ENCODE measurements at regions of chr11 and their contacts with region 1.

Region 1: GRCh38 chr11:1869427-1870325 is 16.8 kb downstream of the LSP1 start:
- DNase-seq: no peak
- ATAC-seq: peak; percentile 50
- H3K4me3 ChIP-seq: no peak overlapping the region
- H3K27ac ChIP-seq: no peak overlapping the region
- H3K4me1 ChIP-seq: peaks cover 20% of the 10 kb centered on the region
- H3K27me3 ChIP-seq: no peaks in the 10 kb centered on the region
- CTCF ChIP-seq: peak; percentile 79

Region 2: GRCh38 chr11:1261241-1262071 is 608.2 kb before region 1 on chr11:
- CTCF ChIA-PET with region 1: interaction called, 11 read pairs
- POLR2A ChIA-PET with region 1: no interaction called
- in situ Hi-C with region 1: no loop called
- intact Hi-C with region 1: no loop called
- DNase-seq: no peak
- ATAC-seq: no peak
- H3K4me3 ChIP-seq: peak overlapping the region; percentile 44 to 71
- H3K27ac ChIP-seq: peak overlapping the region; percentile 82; the same call in 1 of the 2 replicates
- H3K4me1 ChIP-seq: peaks cover 19% of the 10 kb centered on the region
- H3K27me3 ChIP-seq: no peaks in the 10 kb centered on the region; the same call in 1 of the 2 replicates
- CTCF ChIP-seq: no peak

Region 3: GRCh38 chr11:1837171-1838076 is 32.3 kb before region 1 on chr11:
- CTCF ChIA-PET with region 1: interaction called, 6 read pairs
- POLR2A ChIA-PET with region 1: no interaction called
- in situ Hi-C with region 1: no loop called
- intact Hi-C with region 1: loop called (anchors 1 kb)
- DNase-seq: no peak
- ATAC-seq: peak; percentile 72
- H3K4me3 ChIP-seq: no peak overlapping the region
- H3K27ac ChIP-seq: no peak overlapping the region
- H3K4me1 ChIP-seq: peaks cover 42% of the 10 kb centered on the region
- H3K27me3 ChIP-seq: no peaks in the 10 kb centered on the region
- CTCF ChIP-seq: peak; percentile 99

Region 4: DNA sequence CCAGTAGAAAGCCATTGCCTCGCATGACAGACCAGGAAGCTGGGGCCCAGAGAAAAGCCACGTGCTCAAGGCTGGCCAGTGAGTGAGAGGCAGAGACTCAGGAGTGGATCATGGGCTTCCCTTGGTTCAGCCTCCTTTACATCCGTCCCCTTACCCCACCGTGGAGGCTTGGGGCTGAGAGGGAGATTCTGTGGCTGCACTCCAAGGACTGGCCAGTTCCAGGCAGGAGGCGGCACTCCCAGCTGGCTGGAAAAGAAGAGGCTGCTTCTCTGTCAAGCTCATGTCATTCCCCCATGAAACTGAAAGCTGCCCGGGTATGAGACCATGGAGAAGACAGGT is 407.3 kb after region 1 on chr11:
- CTCF ChIA-PET with region 1: no interaction called
- POLR2A ChIA-PET with region 1: no interaction called
- in situ Hi-C with region 1: no loop called
- intact Hi-C with region 1: no loop called
- DNase-seq: no peak
- ATAC-seq: no peak
- H3K4me3 ChIP-seq: no peak overlapping the region
- H3K27ac ChIP-seq: no peak overlapping the region
- H3K4me1 ChIP-seq: no peaks in the 10 kb centered on the region
- H3K27me3 ChIP-seq: peaks cover 15% of the 10 kb centered on the region
- CTCF ChIP-seq: no peak